ENCODE measurements at regions of chr4 and their contacts with region 1.

Region 1: GRCh38 chr4:48367016-48367415 is 25.7 kb downstream of the SLAIN2 start:
- DNase-seq: no peak
- ATAC-seq: no peak

Region 2: GRCh38 chr4:48329976-48330375 is 37.0 kb before region 1 on chr4:
- intact Hi-C with region 1: no loop called
- DNase-seq: no peak
- ATAC-seq: peak; percentile 45

Region 3: GRCh38 chr4:48347282-48347921 is 19.6 kb before region 1 on chr4:
- intact Hi-C with region 1: loop called (anchors 1 kb)
- DNase-seq: no peak
- ATAC-seq: no peak

Measured in sciatic nerve (tissue), 2 donors.